HepG2 (cell line): ENCODE measurements at regions of chr2 and their contacts with region 1.

Region 1: GRCh38 chr2:41840702-41841551 is 206.9 kb upstream of the PKDCC start:
- DNase-seq: peak; percentile 96
- ATAC-seq: peak; percentile 99
- H3K4me3 ChIP-seq: peak overlapping the region; percentile 64 to 80 (median 75)
- H3K27ac ChIP-seq: peak overlapping the region; percentile 59
- H3K4me1 ChIP-seq: peaks cover 23% of the 10 kb centered on the region
- H3K27me3 ChIP-seq: no peaks in the 10 kb centered on the region; a peak in 1 of 5 replicates
- CTCF ChIP-seq: peak; percentile 100
- EP300 ChIP-seq: peak; percentile 50 to 54; a peak in 2 of 4 replicates
- POLR2A ChIP-seq: peak; percentile 81 to 85
- RAD21 ChIP-seq: peak; percentile 99

Region 2: DNA sequence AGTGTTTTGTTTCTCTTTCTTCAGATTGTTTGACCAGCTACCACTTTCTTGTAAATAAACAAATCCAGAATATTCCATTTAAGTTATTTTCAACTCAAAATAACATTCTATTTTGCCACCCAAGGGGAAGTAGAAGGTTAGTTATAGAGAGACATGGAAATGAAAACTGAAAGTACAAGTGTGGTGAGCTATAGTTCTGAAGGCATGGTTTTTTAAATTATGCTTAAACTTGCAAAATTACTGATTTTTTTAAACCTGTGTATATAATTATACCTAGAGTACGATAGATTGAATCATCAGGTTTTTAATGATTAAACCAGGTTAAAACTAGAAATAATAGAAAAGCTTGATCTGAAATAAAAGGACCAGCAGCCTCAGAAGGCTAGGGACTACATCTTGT is 120.6 kb before region 1 on chr2:
- CTCF ChIA-PET with region 1: no interaction called
- POLR2A ChIA-PET with region 1: no interaction called
- in situ Hi-C with region 1: no loop called
- intact Hi-C with region 1: no loop called
- DNase-seq: no peak
- ATAC-seq: no peak
- H3K4me3 ChIP-seq: no peak overlapping the region
- H3K27ac ChIP-seq: no peak overlapping the region
- H3K4me1 ChIP-seq: peaks cover 8% of the 10 kb centered on the region; the same call in 1 of the 2 replicates
- H3K27me3 ChIP-seq: 0 out of 5 replicates have a peak, but pooled peaks cover 0 to 2% of the 10 kb centered on the region in 2 experiments
- CTCF ChIP-seq: no peak
- EP300 ChIP-seq: no peak
- POLR2A ChIP-seq: no peak
- RAD21 ChIP-seq: no peak

Region 3: GRCh38 chr2:41806286-41806685 is 34.6 kb before region 1 on chr2:
- CTCF ChIA-PET with region 1: no interaction called
- POLR2A ChIA-PET with region 1: no interaction called
- in situ Hi-C with region 1: no loop called
- intact Hi-C with region 1: loop called (anchors 1 kb)
- DNase-seq: peak; percentile 12
- ATAC-seq: peak; percentile 53; the same call in 2 of the 3 replicates
- H3K4me3 ChIP-seq: no peak overlapping the region
- H3K27ac ChIP-seq: no peak overlapping the region
- H3K4me1 ChIP-seq: no peaks in the 10 kb centered on the region
- H3K27me3 ChIP-seq: no peaks in the 10 kb centered on the region
- CTCF ChIP-seq: peak; percentile 52
- EP300 ChIP-seq: no peak
- POLR2A ChIP-seq: no peak
- RAD21 ChIP-seq: peak; percentile 46; the same call in 1 of the 2 replicates

Region 4: DNA sequence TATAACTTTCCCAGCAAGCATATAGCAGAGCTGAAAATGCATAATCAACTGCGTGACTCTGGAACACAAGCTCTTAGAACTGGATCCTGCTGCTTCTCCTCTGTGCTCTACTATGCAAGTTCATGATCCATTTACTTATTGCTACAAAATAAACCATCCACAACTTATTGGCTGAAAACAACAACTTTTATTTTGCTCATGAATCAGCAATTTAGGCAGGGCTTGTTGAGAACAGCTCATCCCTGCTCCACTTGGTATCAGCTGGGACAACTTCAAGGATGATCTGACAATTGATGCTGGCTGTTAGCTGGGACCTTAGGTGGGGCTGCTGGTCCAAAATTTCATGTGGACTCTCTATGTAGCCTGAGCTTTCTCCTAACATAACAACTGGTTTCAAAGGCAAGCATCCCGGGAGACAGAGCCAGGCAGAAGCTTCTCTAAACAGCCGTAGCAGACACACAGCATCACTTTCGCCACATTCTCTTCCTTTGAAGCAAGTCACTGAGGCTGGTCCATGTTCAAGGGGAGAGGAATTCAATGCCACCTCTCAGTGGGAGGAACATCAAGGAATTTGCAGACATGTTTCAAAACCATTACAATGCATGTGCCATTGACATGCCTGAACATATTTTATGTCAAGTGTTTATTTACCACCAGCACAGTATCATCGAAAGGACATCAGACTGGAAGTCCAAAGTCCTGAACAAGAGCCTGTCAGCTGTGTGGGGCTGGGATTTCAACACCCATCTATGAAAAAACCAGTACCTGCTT is 53.8 kb after region 1 on chr2:
- CTCF ChIA-PET with region 1: no interaction called
- POLR2A ChIA-PET with region 1: no interaction called
- in situ Hi-C with region 1: no loop called
- intact Hi-C with region 1: loop called (anchors 2 kb)
- DNase-seq: peak; percentile 92
- ATAC-seq: peak; percentile 93
- H3K4me3 ChIP-seq: no peak overlapping the region
- H3K27ac ChIP-seq: peak overlapping the region; percentile 20
- H3K4me1 ChIP-seq: peaks cover 25% of the 10 kb centered on the region
- H3K27me3 ChIP-seq: peaks cover 0 to 14% of the 10 kb centered on the region in 2 experiments; a peak in 3 of 5 replicates
- CTCF ChIP-seq: no peak
- EP300 ChIP-seq: peak; percentile 64 to 84
- POLR2A ChIP-seq: no peak
- RAD21 ChIP-seq: no peak